Dorsolateral prefrontal cortex (tissue), 120 donors: ENCODE measurements at regions of chr17 and their contacts with region 1.

Region 1: GRCh38 chr17:58517734-58518609 is 3.5 kb upstream of the MTMR4 start:
- DNase-seq: peak; percentile 98 to 100 (median 100)
- H3K4me3 ChIP-seq: peak overlapping the region; percentile 69 to 100 (median 92)
- H3K27ac ChIP-seq: peak overlapping the region; percentile 72 to 100 (median 97)
- H3K27me3 ChIP-seq: no peaks in the 10 kb centered on the region
- CTCF ChIP-seq: no peak

Region 2: GRCh38 chr17:58352014-58352842 is 165.7 kb before region 1 on chr17 and contains the start of gene SUPT4H1:
- intact Hi-C with region 1: loop called (anchors 5 to 10 kb)
- DNase-seq: peak; percentile 71 to 92 (median 78)
- H3K4me3 ChIP-seq: peak within 1 kb of the TSS; percentile 71 to 100 (median 93)
- H3K27ac ChIP-seq: peak within 1 kb of the TSS; percentile 66 to 98 (median 93)
- H3K27me3 ChIP-seq: no peaks in the 10 kb centered on the region
- CTCF ChIP-seq: peak in 36 of 56 donors; percentile 13 to 57 (median 34)
- total RNA-seq, gene SUPT4H1: 34.1 to 73.3 (median 52.1) TPM

Region 3: GRCh38 chr17:58476812-58477211 is 41.2 kb before region 1 on chr17:
- intact Hi-C with region 1: no loop called
- DNase-seq: no peak
- H3K4me3 ChIP-seq: no peak overlapping the region
- H3K27ac ChIP-seq: no peak overlapping the region
- H3K27me3 ChIP-seq: no peaks in the 10 kb centered on the region
- CTCF ChIP-seq: no peak

Region 4: GRCh38 chr17:58531661-58532554 is 13.9 kb after region 1 on chr17:
- intact Hi-C with region 1: no loop called
- DNase-seq: peak; percentile 67 to 91 (median 81)
- H3K4me3 ChIP-seq: peak overlapping the region; percentile 64 to 93 (median 81)
- H3K27ac ChIP-seq: peak overlapping the region; percentile 85 to 100 (median 99)
- H3K27me3 ChIP-seq: no peaks in the 10 kb centered on the region
- CTCF ChIP-seq: peak in 2 of 56 donors; percentile 11 to 16

Region 5: GRCh38 chr17:58631523-58632323 is 113.8 kb after region 1 on chr17:
- intact Hi-C with region 1: loop called (anchors 1 to 2 kb)
- DNase-seq: peak; percentile 93 to 98 (median 96)
- H3K4me3 ChIP-seq: peak overlapping the region; percentile 21 to 70 (median 53)
- H3K27ac ChIP-seq: peak overlapping the region; percentile 69 to 98 (median 92)
- H3K27me3 ChIP-seq: no peaks in the 10 kb centered on the region
- CTCF ChIP-seq: peak in 49 of 56 donors; percentile 3 to 63 (median 44)

Region 6: GRCh38 chr17:59004338-59005111 is 486.6 kb after region 1 on chr17:
- intact Hi-C with region 1: loop called (anchors 5 kb)
- DNase-seq: peak in 7 of 10 donors; percentile 34 to 77 (median 55)
- H3K4me3 ChIP-seq: no peak overlapping the region
- H3K27ac ChIP-seq: peak overlapping the region in 7 of 59 donors; percentile 1 to 48 (median 37)
- H3K27me3 ChIP-seq: no peaks in the 10 kb centered on the region
- CTCF ChIP-seq: peak; percentile 91 to 99 (median 97)

Region 7: GRCh38 chr17:59155439-59156182 is 637.6 kb after region 1 on chr17 and contains the start of gene PRR11:
- intact Hi-C with region 1: loop called in 1 of 2 experiments (anchors 2 kb)
- DNase-seq: peak; percentile 90 to 99 (median 98)
- H3K4me3 ChIP-seq: peak within 1 kb of the TSS; percentile 56 to 95 (median 80)
- H3K27ac ChIP-seq: peak within 1 kb of the TSS; percentile 32 to 96 (median 89)
- H3K27me3 ChIP-seq: no peaks in the 10 kb centered on the region
- CTCF ChIP-seq: peak in 4 of 56 donors; percentile 2 to 31 (median 18)
- total RNA-seq, gene PRR11: 1.0 to 7.2 (median 2.9) TPM